HepG2 (cell line): ENCODE measurements at regions of chr20 and their contacts with region 1.

Region 1: GRCh38 chr20:62953839-62954703 is 1.6 kb downstream of the SLC17A9 start:
- DNase-seq: peak; percentile 95
- ATAC-seq: peak; percentile 69
- H3K4me3 ChIP-seq: peak overlapping the region; percentile 74 to 95 (median 78)
- H3K27ac ChIP-seq: peak overlapping the region; percentile 93
- H3K4me1 ChIP-seq: peaks cover 76% of the 10 kb centered on the region
- H3K27me3 ChIP-seq: no peaks in the 10 kb centered on the region; a peak in 1 of 5 replicates
- CTCF ChIP-seq: peak; percentile 41; the same call in 1 of the 2 replicates
- EP300 ChIP-seq: peak in 1 of 2 experiments; percentile 67; a peak in 2 of 4 replicates
- POLR2A ChIP-seq: peak in 1 of 2 experiments; percentile 55; a peak in 2 of 4 replicates
- RAD21 ChIP-seq: peak; percentile 23; the same call in 1 of the 2 replicates

Region 2: DNA sequence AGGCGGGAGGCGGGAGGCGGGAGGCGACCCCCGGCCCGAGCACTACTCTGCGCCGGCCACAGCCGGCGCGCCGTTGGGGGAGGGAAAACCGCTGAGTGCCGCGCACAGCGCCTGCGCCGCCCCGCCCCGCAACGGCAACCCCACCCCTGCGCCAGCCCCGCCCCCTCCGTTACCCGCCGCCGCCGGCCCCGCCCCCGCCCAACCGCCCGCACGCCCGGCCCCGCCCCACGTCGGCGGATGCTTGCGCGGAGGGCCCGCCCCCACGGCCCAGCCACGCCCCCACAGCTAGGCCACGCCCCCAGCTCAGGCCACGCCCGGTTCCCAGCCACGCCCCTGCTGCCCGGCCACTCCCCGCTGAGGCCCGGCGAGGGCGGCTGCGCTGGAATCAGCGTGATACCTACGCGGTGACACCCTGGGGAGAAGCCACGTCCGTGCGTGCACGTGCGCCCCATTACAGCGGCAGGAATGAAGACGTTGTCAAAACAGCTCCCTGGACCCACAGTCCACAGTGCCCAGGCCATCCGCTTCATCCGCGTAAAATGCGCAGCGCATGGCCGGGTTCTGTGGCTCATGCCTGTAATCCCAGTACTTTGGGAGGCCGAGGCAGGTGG is 92.2 kb before region 1 on chr20 and contains the start of gene TCFL5:
- CTCF ChIA-PET with region 1: no interaction called
- POLR2A ChIA-PET with region 1: interaction called, 15 read pairs
- in situ Hi-C with region 1: no loop called
- intact Hi-C with region 1: no loop called
- DNase-seq: peak; percentile 88
- ATAC-seq: peak; percentile 93
- H3K4me3 ChIP-seq: peak within 1 kb of the TSS; percentile 61 to 83 (median 77)
- H3K27ac ChIP-seq: peak within 1 kb of the TSS; percentile 20
- H3K4me1 ChIP-seq: peaks cover 44% of the 10 kb centered on the region
- H3K27me3 ChIP-seq: peaks cover 0 to 11% of the 10 kb centered on the region in 2 experiments; a peak in 2 of 5 replicates
- CTCF ChIP-seq: no peak; the same call in 1 of the 2 replicates
- EP300 ChIP-seq: peak in 1 of 2 experiments; percentile 39; a peak in 1 of 4 replicates
- POLR2A ChIP-seq: peak; percentile 66 to 78
- RAD21 ChIP-seq: no peak; the same call in 1 of the 2 replicates
- total RNA-seq, gene TCFL5: 20.0 and 21.1 TPM in 2 replicates

Region 3: GRCh38 chr20:62900052-62900691 is 53.9 kb before region 1 on chr20:
- CTCF ChIA-PET with region 1: no interaction called
- POLR2A ChIA-PET with region 1: interaction called, 18 read pairs
- in situ Hi-C with region 1: no loop called
- intact Hi-C with region 1: loop called (anchors 5 kb)
- DNase-seq: peak; percentile 82
- ATAC-seq: peak; percentile 90
- H3K4me3 ChIP-seq: peak overlapping the region in 1 of 3 experiments; percentile 44; a peak in 2 of 6 replicates
- H3K27ac ChIP-seq: peak overlapping the region; percentile 23
- H3K4me1 ChIP-seq: peaks cover 32% of the 10 kb centered on the region
- H3K27me3 ChIP-seq: no peaks in the 10 kb centered on the region
- CTCF ChIP-seq: peak; percentile 98
- EP300 ChIP-seq: 0 out of 4 replicates have a peak, but pooled peaks of 1 of the 2 experiments have one; percentile 2
- POLR2A ChIP-seq: peak in 1 of 2 experiments; percentile 78; a peak in 2 of 4 replicates
- RAD21 ChIP-seq: peak; percentile 95

Region 4: GRCh38 chr20:62921119-62921687 is 32.9 kb before region 1 on chr20:
- CTCF ChIA-PET with region 1: no interaction called
- POLR2A ChIA-PET with region 1: interaction called, 94 read pairs
- in situ Hi-C with region 1: no loop called
- intact Hi-C with region 1: loop called (anchors 2 kb)
- DNase-seq: peak; percentile 88
- ATAC-seq: peak; percentile 72
- H3K4me3 ChIP-seq: no peak overlapping the region
- H3K27ac ChIP-seq: peak overlapping the region; percentile 9
- H3K4me1 ChIP-seq: peaks cover 75% of the 10 kb centered on the region
- H3K27me3 ChIP-seq: peaks cover 0 to 5% of the 10 kb centered on the region in 2 experiments; a peak in 1 of 5 replicates
- CTCF ChIP-seq: peak; percentile 85
- EP300 ChIP-seq: no peak
- POLR2A ChIP-seq: 0 out of 4 replicates have a peak, but pooled peaks of 1 of the 2 experiments have one; percentile 26
- RAD21 ChIP-seq: peak; percentile 76

Region 5: DNA sequence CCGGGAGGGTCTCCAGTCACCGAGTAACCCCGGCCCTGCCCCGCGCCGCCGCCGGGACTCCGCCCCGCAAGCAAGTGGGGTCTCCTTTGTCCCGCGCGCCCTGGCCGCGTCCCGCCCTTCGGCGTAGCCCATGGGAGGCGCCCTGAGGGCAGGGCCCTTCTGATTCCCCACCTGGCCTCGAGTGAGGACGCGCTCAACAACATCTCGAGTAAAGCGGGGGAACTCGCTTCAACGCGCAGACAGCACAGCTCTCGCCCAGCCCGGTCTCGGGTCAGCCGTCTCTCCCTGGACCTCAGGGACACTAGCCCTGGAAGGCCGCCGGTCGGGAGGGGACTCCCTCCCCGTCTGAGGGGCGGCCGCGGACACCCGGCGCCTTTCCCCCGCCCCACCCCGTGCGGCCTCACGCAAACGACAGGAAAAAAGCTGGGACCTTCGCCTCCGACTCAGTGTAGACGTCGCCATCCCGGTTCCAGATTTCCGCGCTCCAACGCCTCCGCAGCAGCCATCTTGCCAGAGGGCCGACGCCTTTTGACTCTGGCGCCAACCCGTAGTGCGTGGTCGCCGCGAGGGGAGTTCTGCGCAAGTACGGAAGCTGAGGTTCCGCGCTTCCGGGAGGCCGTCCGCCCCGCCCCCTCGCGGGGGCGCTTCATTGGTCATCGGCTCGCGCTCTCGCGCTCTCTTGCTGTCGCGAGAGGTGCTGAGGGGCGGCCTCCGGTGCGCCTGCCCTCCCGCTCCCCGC is 16.5 kb before region 1 on chr20:
- CTCF ChIA-PET with region 1: no interaction called
- POLR2A ChIA-PET with region 1: interaction called, 205 read pairs
- in situ Hi-C with region 1: no loop called
- intact Hi-C with region 1: loop called (anchors 1 kb)
- DNase-seq: peak; percentile 94
- ATAC-seq: peak; percentile 86
- H3K4me3 ChIP-seq: peak overlapping the region; percentile 76 to 94 (median 80)
- H3K27ac ChIP-seq: peak overlapping the region; percentile 89
- H3K4me1 ChIP-seq: peaks cover 72% of the 10 kb centered on the region
- H3K27me3 ChIP-seq: no peaks in the 10 kb centered on the region; a peak in 1 of 5 replicates
- CTCF ChIP-seq: peak; percentile 42
- EP300 ChIP-seq: peak in 1 of 2 experiments; percentile 58; a peak in 1 of 4 replicates
- POLR2A ChIP-seq: peak; percentile 94 to 95
- RAD21 ChIP-seq: peak; percentile 53; the same call in 1 of the 2 replicates

Region 6: DNA sequence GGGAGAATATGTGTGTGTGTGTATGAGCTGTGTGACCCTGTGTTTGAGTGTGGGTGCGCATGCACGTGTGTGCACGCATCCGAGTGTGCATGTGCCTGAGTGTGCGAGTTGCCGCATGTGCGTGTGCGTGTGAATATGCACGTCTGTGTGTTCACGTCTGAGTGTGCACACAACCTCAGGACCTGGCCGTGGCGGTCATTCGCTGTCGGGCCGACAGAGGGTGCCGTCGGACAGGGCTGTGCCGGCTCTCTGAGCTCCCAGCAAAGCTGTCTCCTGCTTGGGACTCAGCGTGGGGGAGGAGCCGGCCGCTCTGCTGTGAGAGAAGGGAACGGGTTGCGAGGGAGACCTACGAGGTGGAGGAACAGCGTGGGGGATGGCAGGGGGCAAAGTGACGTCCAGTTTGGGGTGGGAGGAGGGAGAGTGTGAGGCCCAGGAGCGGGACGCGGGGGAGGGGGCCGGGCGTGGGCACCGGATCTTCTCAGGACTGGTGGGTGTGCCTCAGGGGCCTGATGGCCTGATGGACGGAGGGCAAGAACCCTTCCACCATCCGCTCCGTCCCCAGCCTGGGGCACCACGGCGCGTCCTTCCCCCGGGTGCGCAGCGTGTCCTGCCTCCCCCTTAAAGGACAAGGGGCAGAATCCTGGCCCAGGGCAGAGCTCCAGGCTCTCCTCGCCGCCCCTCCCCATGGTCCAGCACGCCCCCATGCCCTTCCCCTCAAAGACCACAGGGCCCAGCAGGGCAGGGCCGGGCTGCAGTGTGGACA is 18.4 kb after region 1 on chr20:
- CTCF ChIA-PET with region 1: no interaction called
- POLR2A ChIA-PET with region 1: interaction called, 3 read pairs
- in situ Hi-C with region 1: no loop called
- intact Hi-C with region 1: loop called (anchors 2 kb)
- DNase-seq: peak; percentile 79
- ATAC-seq: peak; percentile 63
- H3K4me3 ChIP-seq: peak overlapping the region; percentile 1 to 65 (median 48); a peak in 4 of 6 replicates
- H3K27ac ChIP-seq: no peak overlapping the region
- H3K4me1 ChIP-seq: peaks cover 45% of the 10 kb centered on the region
- H3K27me3 ChIP-seq: peaks cover 30 to 63% of the 10 kb centered on the region in 2 experiments
- CTCF ChIP-seq: peak; percentile 100
- EP300 ChIP-seq: no peak
- POLR2A ChIP-seq: no peak
- RAD21 ChIP-seq: peak; percentile 99